AG04449 (cell line): ENCODE measurements at regions of chr9 and their contacts with region 1.

Region 1: GRCh38 chr9:36450110-36450732 is 50.2 kb upstream of the RNF38 start:
- DNase-seq: peak; percentile 9
- H3K4me3 ChIP-seq: no peak overlapping the region
- CTCF ChIP-seq: peak; percentile 44

Region 2: DNA sequence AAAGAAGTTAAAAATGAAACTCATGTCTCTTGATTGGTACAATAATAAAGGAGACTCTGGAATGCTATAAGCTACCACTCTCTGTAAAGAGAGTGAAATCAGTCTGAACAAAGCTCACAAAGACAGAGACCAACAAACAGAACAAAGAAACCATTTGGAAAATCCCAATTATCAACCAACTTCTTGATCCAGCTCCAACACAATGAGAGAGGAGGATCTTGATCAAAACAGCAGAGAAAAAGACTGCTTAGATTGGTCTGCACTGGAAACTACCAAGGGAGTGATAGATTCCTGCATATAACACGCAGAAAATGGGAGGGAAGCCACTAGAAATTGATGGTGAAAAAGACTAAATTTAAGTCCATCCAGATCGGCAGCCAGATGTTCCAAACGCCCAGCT is 27.0 kb before region 1 on chr9:
- CTCF ChIA-PET with region 1: interaction called, 11 read pairs
- POLR2A ChIA-PET with region 1: no interaction called
- DNase-seq: no peak
- H3K4me3 ChIP-seq: no peak overlapping the region
- CTCF ChIP-seq: no peak

Region 3: DNA sequence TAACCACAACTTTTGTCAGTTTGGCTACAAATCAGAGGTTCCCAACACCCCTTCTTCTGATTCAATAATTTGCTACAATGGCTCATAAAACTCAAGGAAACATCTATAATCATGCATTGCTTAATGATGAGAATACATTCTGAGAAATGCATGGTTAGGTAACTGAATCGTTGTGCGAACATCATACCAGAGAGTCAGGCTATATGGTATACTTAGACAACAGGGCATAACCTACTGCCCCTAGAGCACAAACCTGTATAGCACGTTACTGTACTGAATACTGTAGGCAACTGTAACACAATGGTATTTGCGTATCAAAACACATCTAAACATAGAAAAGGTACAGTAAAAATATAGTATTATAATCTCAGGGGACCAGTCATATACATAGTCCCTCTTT is 19.1 kb before region 1 on chr9:
- CTCF ChIA-PET with region 1: interaction called, 128 read pairs
- POLR2A ChIA-PET with region 1: no interaction called
- DNase-seq: no peak
- H3K4me3 ChIP-seq: no peak overlapping the region
- CTCF ChIP-seq: no peak

Region 4: DNA sequence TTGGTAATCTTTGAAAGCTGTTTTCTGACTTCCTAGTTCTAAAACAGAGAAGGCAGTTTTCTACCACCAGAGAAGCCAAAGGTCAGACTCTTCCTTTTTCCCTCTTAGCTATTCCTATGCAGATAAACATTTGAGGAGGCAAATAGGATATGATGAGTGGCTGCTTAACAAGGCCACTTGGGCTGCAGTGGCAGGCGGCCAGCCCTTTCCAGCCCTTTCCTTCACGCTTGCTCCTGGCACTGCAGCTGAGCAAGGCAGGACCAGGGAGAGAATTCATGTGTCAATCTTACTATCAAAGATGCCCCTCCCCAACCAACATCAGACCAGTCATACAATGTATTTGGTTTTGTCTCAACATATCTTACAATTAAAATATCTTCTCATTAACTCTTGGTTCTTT is 13.3 kb before region 1 on chr9:
- CTCF ChIA-PET with region 1: interaction called, 128 read pairs
- POLR2A ChIA-PET with region 1: no interaction called
- DNase-seq: no peak
- H3K4me3 ChIP-seq: no peak overlapping the region
- CTCF ChIP-seq: no peak

Region 5: DNA sequence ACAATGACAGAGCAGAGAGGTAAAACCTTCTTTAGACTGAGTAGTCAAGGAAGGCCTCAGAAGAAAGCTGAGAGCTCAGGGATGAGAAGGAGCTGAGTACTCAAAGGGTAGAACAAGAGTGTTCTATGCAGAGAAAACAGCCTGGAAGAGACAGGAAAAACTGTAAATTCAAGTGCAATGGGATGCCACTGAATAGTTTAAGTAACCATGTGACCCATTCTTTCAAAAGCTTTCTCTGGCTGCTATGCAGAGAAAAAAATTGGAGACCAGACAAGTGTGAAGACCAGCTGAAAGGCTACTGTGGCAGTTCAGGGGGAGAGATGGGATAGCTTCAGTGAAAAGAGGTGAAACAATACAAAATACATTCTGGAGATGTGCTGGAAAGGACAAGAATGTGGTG is 11.1 kb after region 1 on chr9:
- CTCF ChIA-PET with region 1: interaction called, 31 read pairs
- POLR2A ChIA-PET with region 1: no interaction called
- DNase-seq: peak; percentile 5
- H3K4me3 ChIP-seq: no peak overlapping the region
- CTCF ChIP-seq: no peak

Region 6: GRCh38 chr9:36560857-36561221 is 110.6 kb after region 1 on chr9:
- CTCF ChIA-PET with region 1: interaction called, 25 read pairs
- POLR2A ChIA-PET with region 1: no interaction called
- DNase-seq: no peak
- H3K4me3 ChIP-seq: no peak overlapping the region
- CTCF ChIP-seq: no peak

Region 7: GRCh38 chr9:36592801-36593583 is 142.8 kb after region 1 on chr9:
- CTCF ChIA-PET with region 1: no interaction called
- POLR2A ChIA-PET with region 1: no interaction called
- DNase-seq: no peak
- H3K4me3 ChIP-seq: no peak overlapping the region
- CTCF ChIP-seq: no peak

Region 8: DNA sequence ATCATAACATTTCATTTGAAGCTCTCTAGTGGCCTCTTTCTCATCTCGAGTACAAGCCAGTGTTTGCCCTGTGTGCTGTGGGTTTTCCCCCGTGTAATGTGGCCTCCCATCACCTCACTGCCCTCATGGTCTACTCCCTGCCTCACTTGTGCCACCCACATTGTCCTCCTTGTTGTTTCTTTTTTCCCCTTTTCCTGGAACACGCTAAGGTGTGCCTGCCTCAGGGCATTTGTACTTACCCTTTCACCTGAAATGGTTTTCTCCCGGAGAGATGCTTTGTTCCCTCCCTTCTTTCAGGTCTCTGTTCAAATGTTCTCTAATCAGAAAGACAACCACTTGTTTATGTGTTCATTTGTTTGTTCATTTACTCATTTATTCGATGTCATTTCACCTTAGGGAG is 162.7 kb after region 1 on chr9:
- CTCF ChIA-PET with region 1: no interaction called
- POLR2A ChIA-PET with region 1: no interaction called
- DNase-seq: no peak
- H3K4me3 ChIP-seq: no peak overlapping the region
- CTCF ChIP-seq: no peak